Activated CD8-positive, alpha-beta T cell treated with anti-CD3 and anti-CD28 coated beads, Interleukin-2, amount 10 ng/mL, durations not matched to agents 7 days and 5 days (primary cell): ENCODE measurements at regions of chr3 and their contacts with region 1.

Region 1: GRCh38 chr3:48439820-48440589 is at the starts of genes CCDC51 and TMA7:
- DNase-seq: peak; percentile 99
- ATAC-seq: peak; percentile 96
- H3K4me3 Mint-ChIP-seq: peak within 1 kb of the TSS; percentile 97
- H3K27ac Mint-ChIP-seq: peak within 1 kb of the TSS; percentile 96
- H3K4me1 Mint-ChIP-seq: peaks cover 34% of the 10 kb centered on the region
- H3K27me3 Mint-ChIP-seq: no peaks in the 10 kb centered on the region
- total RNA-seq, gene CCDC51: 16.3 to 16.5 TPM
- total RNA-seq, gene TMA7: 339 to 364 TPM

Region 2: GRCh38 chr3:48194446-48195071 is 245.4 kb before region 1 on chr3:
- CTCF ChIA-PET with region 1: interaction called, 31 read pairs
- POLR2A ChIA-PET with region 1: no interaction called
- DNase-seq: peak; percentile 41
- ATAC-seq: peak; percentile 22
- H3K4me3 Mint-ChIP-seq: no peak overlapping the region
- H3K27ac Mint-ChIP-seq: no peak overlapping the region
- H3K4me1 Mint-ChIP-seq: no peaks in the 10 kb centered on the region
- H3K27me3 Mint-ChIP-seq: no peaks in the 10 kb centered on the region

Region 3: DNA sequence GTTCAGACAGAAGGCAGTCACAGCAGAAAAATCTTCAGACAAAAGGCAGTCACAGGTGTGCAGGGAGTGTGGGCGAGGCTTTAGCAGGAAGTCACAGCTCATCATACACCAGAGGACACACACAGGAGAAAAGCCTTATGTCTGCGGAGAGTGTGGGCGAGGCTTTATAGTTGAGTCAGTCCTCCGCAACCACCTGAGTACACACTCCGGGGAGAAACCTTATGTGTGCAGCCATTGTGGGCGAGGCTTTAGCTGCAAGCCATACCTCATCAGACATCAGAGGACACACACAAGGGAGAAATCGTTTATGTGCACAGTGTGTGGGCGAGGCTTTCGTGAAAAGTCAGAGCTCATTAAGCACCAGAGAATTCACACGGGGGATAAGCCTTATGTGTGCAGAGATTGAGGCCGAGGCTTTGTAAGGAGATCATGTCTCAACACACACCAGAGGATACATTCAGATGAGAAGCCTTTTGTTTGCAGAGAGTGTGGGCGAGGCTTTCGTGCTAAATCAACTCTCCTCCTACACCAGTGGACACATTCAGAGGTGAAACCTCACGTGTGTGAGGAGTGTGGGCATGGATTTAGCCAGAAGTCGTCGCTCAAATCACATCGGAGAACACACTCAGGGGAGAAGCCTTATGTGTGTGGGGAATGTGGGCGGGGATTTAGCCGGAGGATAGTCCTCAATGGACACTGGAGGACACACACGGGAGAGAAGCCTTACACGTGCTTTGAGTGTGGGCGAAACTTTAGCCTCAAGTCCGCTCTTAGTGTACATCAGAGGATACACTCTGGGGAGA is 171.4 kb before region 1 on chr3:
- CTCF ChIA-PET with region 1: interaction called, 319 read pairs
- POLR2A ChIA-PET with region 1: interaction called, 7 read pairs
- DNase-seq: peak; percentile 89
- ATAC-seq: peak; percentile 97
- H3K4me3 Mint-ChIP-seq: peak overlapping the region; percentile 60
- H3K27ac Mint-ChIP-seq: peak overlapping the region; percentile 85
- H3K4me1 Mint-ChIP-seq: peaks cover 38% of the 10 kb centered on the region
- H3K27me3 Mint-ChIP-seq: no peaks in the 10 kb centered on the region

Region 4: DNA sequence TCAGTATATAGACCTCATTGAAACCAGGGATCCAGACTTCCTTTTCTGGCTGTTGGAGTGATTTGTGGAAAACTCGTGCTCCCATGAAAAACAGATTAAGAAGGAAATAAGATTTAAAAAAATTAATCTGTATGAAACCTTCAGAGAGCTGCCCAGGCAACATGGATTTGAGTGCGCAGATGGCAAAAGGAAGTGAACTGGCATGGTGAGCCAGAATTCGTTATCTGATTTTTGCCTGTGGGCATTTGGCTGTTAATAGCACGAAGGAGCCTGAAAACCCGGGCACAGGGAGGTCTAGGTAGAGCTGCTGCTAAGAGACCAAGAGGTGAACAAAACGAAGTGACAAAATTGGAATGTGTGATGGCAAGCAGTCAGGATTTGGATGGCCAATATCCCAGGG is 87.5 kb before region 1 on chr3:
- CTCF ChIA-PET with region 1: interaction called, 15 read pairs
- POLR2A ChIA-PET with region 1: no interaction called
- DNase-seq: no peak
- ATAC-seq: no peak
- H3K4me3 Mint-ChIP-seq: no peak overlapping the region
- H3K27ac Mint-ChIP-seq: no peak overlapping the region
- H3K4me1 Mint-ChIP-seq: no peaks in the 10 kb centered on the region
- H3K27me3 Mint-ChIP-seq: peaks cover 29% of the 10 kb centered on the region

Region 5: DNA sequence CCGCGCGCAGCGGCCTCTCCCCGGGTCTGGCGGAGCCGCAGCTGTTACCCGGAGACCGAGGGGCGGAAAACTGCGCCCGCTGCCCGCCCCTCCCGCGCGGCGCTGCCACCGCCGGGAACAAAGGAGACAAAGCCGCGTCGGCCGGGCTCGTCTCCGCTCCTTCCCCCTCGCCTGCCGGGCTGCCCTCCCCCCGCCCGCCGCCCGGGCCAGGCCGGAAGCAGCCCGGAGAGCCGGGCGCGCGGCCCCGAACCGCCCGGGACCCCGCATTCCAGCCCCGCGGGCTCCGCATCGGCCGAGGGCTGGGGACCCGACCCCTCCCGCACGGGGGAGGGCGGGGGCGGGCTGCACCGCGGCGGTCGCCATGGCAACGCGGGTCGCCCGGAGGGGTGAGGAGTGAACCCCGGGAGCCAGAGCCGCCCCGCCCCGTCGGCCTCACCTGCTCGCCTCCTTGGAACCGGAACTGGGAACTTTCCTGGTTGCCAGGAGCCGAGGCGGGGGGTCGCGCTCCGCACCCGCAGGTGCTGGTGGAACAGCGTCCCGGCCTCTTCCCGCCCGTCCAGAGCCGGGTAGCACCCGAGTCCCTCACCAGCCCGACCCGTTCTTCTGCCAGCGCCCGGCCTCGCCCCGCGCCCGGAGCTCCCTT is 10.6 kb before region 1 on chr3:
- CTCF ChIA-PET with region 1: interaction called, 59 read pairs
- POLR2A ChIA-PET with region 1: interaction called, 3 read pairs
- DNase-seq: peak; percentile 53
- ATAC-seq: peak; percentile 74
- H3K4me3 Mint-ChIP-seq: peak overlapping the region; percentile 71
- H3K27ac Mint-ChIP-seq: no peak overlapping the region
- H3K4me1 Mint-ChIP-seq: peaks cover 17% of the 10 kb centered on the region
- H3K27me3 Mint-ChIP-seq: peaks cover 18% of the 10 kb centered on the region

Region 6: GRCh38 chr3:48514436-48515227 is 74.6 kb after region 1 on chr3:
- CTCF ChIA-PET with region 1: interaction called, 117 read pairs
- POLR2A ChIA-PET with region 1: interaction called, 4 read pairs
- DNase-seq: peak; percentile 77
- ATAC-seq: peak; percentile 73
- H3K4me3 Mint-ChIP-seq: peak overlapping the region; percentile 43
- H3K27ac Mint-ChIP-seq: peak overlapping the region; percentile 75
- H3K4me1 Mint-ChIP-seq: peaks cover 65% of the 10 kb centered on the region
- H3K27me3 Mint-ChIP-seq: peaks cover 6% of the 10 kb centered on the region